ENCODE measurements at regions of chr9 and their contacts with region 1.

Region 1: DNA sequence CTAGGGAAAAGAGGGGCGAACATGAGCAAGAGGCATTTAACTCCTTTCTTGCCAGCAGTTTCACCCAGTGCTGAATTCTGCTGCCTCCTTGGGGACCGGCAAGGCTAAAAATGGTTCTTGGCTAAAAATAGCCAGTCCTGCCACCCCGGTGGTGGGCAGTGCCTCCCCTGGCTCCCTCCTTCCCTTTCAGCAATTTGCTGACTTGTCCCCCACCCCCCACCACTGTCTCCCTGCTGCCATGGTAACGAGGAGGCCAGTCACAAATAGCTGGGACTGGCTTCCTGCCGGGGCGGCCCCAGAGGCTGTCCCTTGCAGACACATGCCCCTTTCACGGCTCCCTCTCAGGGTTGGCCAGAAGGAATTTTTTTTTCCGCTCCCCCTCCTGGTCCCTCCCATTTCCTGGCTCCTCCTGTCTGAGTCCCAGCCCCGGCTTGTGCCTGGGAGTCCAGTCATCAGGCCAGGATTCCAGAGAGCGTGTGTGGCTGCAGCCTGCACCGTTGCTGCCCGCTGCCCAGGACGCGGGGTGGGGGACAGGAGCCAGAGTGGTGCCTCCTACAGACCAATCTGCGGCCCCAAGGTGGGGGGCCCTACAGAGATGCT is 130.3 kb downstream of the RGS3 start:
- DNase-seq: peak; percentile 61 to 93 (median 81)

Region 2: GRCh38 chr9:113446323-113446740 is 147.4 kb before region 1 on chr9:
- intact Hi-C with region 1: loop called (anchors 5 kb)
- DNase-seq: peak in 4 of 42 donors; percentile 15 to 41 (median 21)

Measured in head of caudate nucleus (tissue), 42 donors.